ENCODE measurements at regions of chr16 and their contacts with region 1.

Region 1: GRCh38 chr16:75110637-75111513 is 5.7 kb downstream of the LDHD start:
- DNase-seq: peak; percentile 94 to 96
- H3K4me3 ChIP-seq: peak overlapping the region; percentile 0 to 21 (median 16)
- H3K27ac ChIP-seq: peak overlapping the region; percentile 63 to 86 (median 85)
- H3K4me1 ChIP-seq: peaks cover 59 to 91% (median 83%) of the 10 kb centered on the region in 4 donors
- H3K27me3 ChIP-seq: no peaks in the 10 kb centered on the region
- CTCF ChIP-seq: peak in 6 of 7 experiments; percentile 15 to 96 (median 92)
- EP300 ChIP-seq: no peak
- POLR2A ChIP-seq: no peak

Region 2: DNA sequence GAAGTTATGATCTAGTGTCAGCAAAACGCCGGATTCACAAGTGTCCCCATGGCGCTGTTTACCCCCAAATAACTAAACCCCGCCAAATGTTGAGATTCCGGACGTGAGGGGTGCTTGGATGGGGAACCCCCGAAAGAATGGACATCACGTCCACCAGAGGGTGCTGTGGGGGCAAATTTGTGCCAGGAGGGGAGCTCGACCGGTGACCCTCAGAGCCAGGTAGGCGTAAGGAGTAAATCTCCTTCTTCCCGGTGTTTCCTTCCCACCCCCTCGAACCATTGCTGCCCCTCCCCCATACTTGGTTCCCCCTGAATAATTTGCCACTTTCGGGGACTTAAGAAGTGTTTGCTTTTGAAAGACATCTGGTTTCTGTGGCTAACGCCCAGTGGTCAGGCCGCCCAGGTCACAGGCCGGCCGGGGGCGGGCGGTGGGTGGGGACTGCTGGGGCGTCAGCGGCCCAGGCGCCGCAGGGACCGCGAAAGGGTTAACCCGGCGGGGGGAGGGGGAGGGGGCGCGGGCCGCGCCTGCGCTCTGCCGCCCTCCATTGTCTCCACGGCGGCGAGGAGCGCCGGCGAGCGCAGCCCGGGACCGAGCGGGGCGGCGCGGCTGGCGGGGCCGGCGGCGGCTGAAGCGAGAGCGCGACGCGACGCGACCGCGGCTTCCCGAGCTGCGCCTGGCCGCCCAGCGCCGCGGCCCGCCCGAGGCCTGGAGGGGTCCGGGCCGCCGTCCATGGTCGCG is 112.2 kb before region 1 on chr16 and contains the start of gene ZNRF1:
- intact Hi-C with region 1: loop called (anchors 5 kb)
- DNase-seq: peak; percentile 86 to 95
- H3K4me3 ChIP-seq: peak within 1 kb of the TSS; percentile 94 to 98 (median 95)
- H3K27ac ChIP-seq: peak within 1 kb of the TSS; percentile 85 to 94 (median 89)
- H3K4me1 ChIP-seq: peaks cover 29 to 51% (median 43%) of the 10 kb centered on the region in 4 donors
- H3K27me3 ChIP-seq: no peaks in the 10 kb centered on the region
- CTCF ChIP-seq: peak in 5 of 7 experiments; percentile 55 to 85 (median 80)
- EP300 ChIP-seq: no peak
- POLR2A ChIP-seq: no peak
- total RNA-seq, gene ZNRF1: 8.8 to 40.1 (median 18.7) TPM

Region 3: GRCh38 chr16:75148311-75149195 is 37.7 kb after region 1 on chr16 and contains the start of gene ZFP1:
- intact Hi-C with region 1: no loop called
- DNase-seq: peak; percentile 96 to 98
- H3K4me3 ChIP-seq: peak within 1 kb of the TSS; percentile 86 to 100 (median 98)
- H3K27ac ChIP-seq: peak within 1 kb of the TSS; percentile 96 to 100 (median 99)
- H3K4me1 ChIP-seq: peaks cover 0 to 15% (median 9%) of the 10 kb centered on the region in 4 donors
- H3K27me3 ChIP-seq: no peaks in the 10 kb centered on the region
- CTCF ChIP-seq: no peak
- EP300 ChIP-seq: no peak
- POLR2A ChIP-seq: no peak
- total RNA-seq, gene ZFP1: 2.7 to 29.2 (median 10.2) TPM in 4 of 5 donors, not detected in the other

Measured in stomach (tissue), 19 donors.